Activated CD4-positive, alpha-beta T cell treated with anti-CD3 and anti-CD28 coated beads for 36 hours (primary cell): ENCODE measurements at regions of chr15 and their contacts with region 1.

Region 1: GRCh38 chr15:52256366-52256765 is 39.2 kb downstream of the MYO5C start:
- DNase-seq: peak; percentile 88
- ATAC-seq: peak; percentile 48
- H3K4me3 Mint-ChIP-seq: peak overlapping the region; percentile 53
- H3K27ac Mint-ChIP-seq: peak overlapping the region; percentile 70
- H3K4me1 Mint-ChIP-seq: peaks cover 31% of the 10 kb centered on the region
- H3K27me3 Mint-ChIP-seq: no peaks in the 10 kb centered on the region

Region 2: GRCh38 chr15:52233405-52233804 is 23.0 kb before region 1 on chr15:
- CTCF ChIA-PET with region 1: interaction called, 21 read pairs
- POLR2A ChIA-PET with region 1: no interaction called
- intact Hi-C with region 1: no loop called
- DNase-seq: no peak
- ATAC-seq: no peak
- H3K4me3 Mint-ChIP-seq: no peak overlapping the region
- H3K27ac Mint-ChIP-seq: peak overlapping the region; percentile 48
- H3K4me1 Mint-ChIP-seq: peaks cover 42% of the 10 kb centered on the region
- H3K27me3 Mint-ChIP-seq: no peaks in the 10 kb centered on the region

Region 3: DNA sequence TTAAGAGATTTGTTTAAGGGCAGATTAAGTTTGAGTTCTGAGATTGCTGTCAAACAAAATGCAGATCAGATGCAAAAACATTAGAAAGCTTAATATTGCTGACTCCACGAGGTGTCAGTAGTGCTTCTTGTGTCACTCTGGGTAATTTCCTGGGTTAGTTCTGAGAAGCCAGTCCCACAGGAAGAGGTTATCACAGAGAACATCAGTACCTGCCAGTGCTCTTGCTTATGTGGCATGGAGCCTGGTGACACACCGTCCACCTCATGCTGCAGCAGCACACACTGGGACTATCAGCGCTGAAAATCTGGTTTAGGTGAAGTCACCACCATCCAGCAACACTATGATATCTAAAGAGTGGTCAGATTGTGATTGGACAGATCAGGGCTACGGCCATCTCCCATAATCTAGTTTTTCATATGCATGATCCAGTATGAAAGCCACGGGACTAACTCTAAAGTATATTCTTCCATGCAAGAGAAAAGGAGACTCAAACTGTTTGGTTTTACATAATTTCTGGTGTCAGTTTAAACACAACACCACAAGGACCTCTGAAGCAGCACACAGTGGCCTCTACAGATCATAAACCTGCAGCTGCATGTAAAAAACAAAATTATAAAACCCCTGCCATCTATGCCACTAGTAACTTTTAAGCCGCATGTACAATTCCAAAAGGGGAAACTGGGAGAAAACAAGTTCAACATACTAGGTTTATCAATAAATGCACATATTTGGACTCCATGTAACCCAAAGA is 75.3 kb after region 1 on chr15:
- CTCF ChIA-PET with region 1: interaction called, 25 read pairs
- POLR2A ChIA-PET with region 1: no interaction called
- intact Hi-C with region 1: loop called (anchors 1 to 5 kb)
- DNase-seq: peak; percentile 66
- ATAC-seq: peak; percentile 99
- H3K4me3 Mint-ChIP-seq: no peak overlapping the region
- H3K27ac Mint-ChIP-seq: peak overlapping the region; percentile 28
- H3K4me1 Mint-ChIP-seq: peaks cover 12% of the 10 kb centered on the region
- H3K27me3 Mint-ChIP-seq: no peaks in the 10 kb centered on the region

Region 4: GRCh38 chr15:52528991-52529926 is 272.9 kb after region 1 on chr15:
- CTCF ChIA-PET with region 1: interaction called, 3 read pairs
- POLR2A ChIA-PET with region 1: interaction called, 3 read pairs
- intact Hi-C with region 1: loop called in 1 of 2 experiments (anchors 1 kb)
- DNase-seq: peak; percentile 89
- ATAC-seq: peak; percentile 89
- H3K4me3 Mint-ChIP-seq: peak overlapping the region; percentile 73
- H3K27ac Mint-ChIP-seq: peak overlapping the region; percentile 87
- H3K4me1 Mint-ChIP-seq: peaks cover 23% of the 10 kb centered on the region
- H3K27me3 Mint-ChIP-seq: peaks cover 10% of the 10 kb centered on the region

Region 5: GRCh38 chr15:52609593-52609992 is 353.2 kb after region 1 on chr15:
- CTCF ChIA-PET with region 1: interaction called, 3 read pairs
- POLR2A ChIA-PET with region 1: no interaction called
- intact Hi-C with region 1: loop called in 1 of 2 experiments (anchors 5 kb)
- DNase-seq: no peak
- ATAC-seq: no peak
- H3K4me3 Mint-ChIP-seq: no peak overlapping the region
- H3K27ac Mint-ChIP-seq: no peak overlapping the region
- H3K4me1 Mint-ChIP-seq: no peaks in the 10 kb centered on the region
- H3K27me3 Mint-ChIP-seq: no peaks in the 10 kb centered on the region